ENCODE measurements at regions of chr21 and their contacts with region 1.

Region 1: GRCh38 chr21:28986677-28987076 is 6.0 kb downstream of the LTN1 start:
- DNase-seq: no peak
- H3K4me3 Mint-ChIP-seq: no peak overlapping the region
- H3K27ac Mint-ChIP-seq: no peak overlapping the region
- H3K4me1 Mint-ChIP-seq: peaks cover 16% of the 10 kb centered on the region
- H3K27me3 Mint-ChIP-seq: no peaks in the 10 kb centered on the region
- CTCF ChIP-seq: no peak

Region 2: DNA sequence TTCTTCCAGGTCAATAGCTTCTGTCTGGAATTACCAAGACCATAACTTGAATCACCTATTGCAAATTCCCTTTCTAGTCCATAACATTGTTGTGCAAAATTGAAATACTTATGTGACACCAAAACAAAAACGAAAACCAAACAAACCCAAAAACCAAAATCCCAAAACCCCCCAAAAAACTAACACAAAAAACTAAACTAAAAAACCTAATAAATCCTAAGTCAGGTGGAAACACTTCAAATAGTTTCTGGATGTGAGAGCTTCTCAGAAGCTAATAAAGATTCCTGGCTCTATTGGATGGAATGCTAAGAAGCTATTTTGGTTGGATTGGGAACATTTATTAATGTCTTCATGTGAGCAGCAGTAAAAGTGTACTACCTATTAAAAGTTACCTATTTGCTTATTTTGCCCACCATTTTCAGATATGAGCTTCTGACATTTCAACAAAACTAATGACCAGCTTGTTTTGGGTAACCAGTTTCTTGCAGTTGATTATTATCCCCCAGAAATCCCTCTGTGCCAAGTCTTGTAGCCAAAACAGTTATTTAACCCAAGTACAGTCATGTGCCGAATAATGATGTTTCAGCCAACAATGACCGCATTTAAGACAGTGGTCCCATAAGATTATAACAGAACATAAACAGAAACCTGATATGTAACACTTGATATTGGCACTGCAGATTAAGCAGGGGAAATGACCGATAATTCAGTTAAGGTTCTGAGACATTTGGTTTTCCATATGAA is 70.4 kb before region 1 on chr21:
- CTCF ChIA-PET with region 1: no interaction called
- POLR2A ChIA-PET with region 1: no interaction called
- intact Hi-C with region 1: loop called (anchors 2 kb)
- DNase-seq: no peak
- H3K4me3 Mint-ChIP-seq: no peak overlapping the region
- H3K27ac Mint-ChIP-seq: no peak overlapping the region
- H3K4me1 Mint-ChIP-seq: no peaks in the 10 kb centered on the region
- H3K27me3 Mint-ChIP-seq: no peaks in the 10 kb centered on the region
- CTCF ChIP-seq: no peak

Measured in MCF 10A (cell line).